Activated CD4-positive, alpha-beta T cell treated with anti-CD3 and anti-CD28 coated beads, Interleukin-2, amount 10 ng/mL, durations not matched to agents 7 days and 5 days (primary cell): ENCODE measurements at regions of chr17 and their contacts with region 1.

Region 1: DNA sequence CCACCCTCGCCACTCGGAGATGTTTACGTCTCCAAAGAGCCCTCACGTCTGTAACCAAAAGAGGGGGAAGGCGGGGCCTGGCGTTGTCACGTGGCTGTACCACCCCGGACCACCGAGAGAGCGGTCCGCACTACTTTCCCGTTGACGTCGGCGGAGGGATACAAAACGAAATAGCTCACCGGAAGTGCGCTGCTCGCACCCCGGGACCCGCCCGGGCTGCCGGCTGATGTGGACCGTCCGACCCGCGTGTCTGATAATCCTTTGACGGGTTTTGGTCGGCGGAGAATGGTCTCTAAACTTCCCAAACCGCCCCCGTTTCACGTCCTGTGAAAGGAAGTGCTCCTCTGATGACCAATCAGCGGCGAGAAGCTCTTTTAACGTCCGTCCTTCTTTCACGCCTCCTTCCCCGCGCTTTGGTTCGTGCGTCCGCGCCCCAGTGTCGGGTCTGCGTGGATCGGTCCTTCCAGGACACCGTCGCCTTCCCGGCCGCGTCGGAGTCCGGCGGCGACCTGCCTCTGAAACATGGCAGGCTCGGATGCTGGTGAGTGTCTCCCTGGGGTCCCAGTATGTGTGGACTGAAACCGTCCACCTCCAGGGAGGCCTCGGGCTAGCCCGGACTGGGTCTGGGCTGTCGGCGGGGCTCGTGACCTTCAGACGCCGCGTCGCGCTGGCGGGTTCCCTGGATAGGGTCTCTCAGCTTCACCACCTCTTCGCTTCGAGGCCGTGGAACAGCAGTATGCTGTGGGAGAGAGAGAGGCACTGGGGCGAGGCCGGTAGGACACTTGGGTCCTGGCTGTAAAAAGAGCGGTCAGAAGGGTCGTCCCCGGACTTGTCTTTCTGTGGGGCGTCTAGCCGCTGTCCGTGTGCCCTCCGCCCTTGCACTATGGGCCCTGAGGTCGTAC is at the start of gene CEP95:
- DNase-seq: peak; percentile 95
- H3K4me3 Mint-ChIP-seq: peak within 1 kb of the TSS; percentile 95
- H3K27ac Mint-ChIP-seq: peak within 1 kb of the TSS; percentile 100
- H3K4me1 Mint-ChIP-seq: peaks cover 52% of the 10 kb centered on the region
- H3K27me3 Mint-ChIP-seq: no peaks in the 10 kb centered on the region
- total RNA-seq, gene CEP95: 45.4 to 48.1 TPM

Region 2: DNA sequence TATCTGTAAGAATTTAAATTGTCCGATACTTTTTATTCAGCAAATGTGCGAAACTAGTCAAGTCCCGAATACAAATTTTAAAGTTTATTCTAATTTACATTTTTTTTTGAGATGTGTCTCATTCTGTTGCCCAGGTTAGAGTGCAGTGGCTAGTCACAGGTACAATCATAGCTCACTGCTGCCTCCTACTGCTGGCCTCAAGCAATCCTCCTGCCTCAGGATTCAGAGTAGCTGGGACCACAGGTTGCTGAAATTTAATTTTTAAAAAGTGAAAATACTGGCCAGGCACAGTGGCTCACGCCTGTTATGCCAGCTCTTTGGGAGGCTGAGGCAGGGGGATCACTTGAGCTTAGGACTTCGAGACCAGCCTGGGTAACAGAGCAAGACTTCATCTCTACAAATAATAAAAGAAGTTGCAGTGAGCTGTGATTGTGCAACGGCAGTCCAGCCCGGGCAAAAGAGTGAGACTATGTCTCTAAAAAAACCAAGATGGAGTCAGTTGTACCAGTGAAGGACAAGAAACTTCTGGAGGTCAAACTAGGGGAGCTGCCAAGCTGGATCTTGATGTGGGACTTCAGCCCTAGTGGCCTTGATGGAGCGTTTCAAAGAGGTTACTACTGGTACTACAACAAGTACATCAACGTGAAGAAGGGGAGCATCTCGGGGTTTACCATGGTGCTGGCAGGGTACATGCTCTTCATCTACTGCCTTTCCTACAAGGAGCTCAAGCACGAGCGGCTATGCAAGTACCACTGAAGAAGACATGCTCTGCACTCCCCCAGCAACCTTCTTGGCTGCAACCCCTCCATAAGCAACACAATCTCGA is 15.6 kb before region 1 on chr17:
- CTCF ChIA-PET with region 1: interaction called, 29 read pairs
- POLR2A ChIA-PET with region 1: interaction called, 15 read pairs
- DNase-seq: peak; percentile 75
- H3K4me3 Mint-ChIP-seq: no peak overlapping the region
- H3K27ac Mint-ChIP-seq: no peak overlapping the region
- H3K4me1 Mint-ChIP-seq: peaks cover 37% of the 10 kb centered on the region
- H3K27me3 Mint-ChIP-seq: no peaks in the 10 kb centered on the region

Region 3: DNA sequence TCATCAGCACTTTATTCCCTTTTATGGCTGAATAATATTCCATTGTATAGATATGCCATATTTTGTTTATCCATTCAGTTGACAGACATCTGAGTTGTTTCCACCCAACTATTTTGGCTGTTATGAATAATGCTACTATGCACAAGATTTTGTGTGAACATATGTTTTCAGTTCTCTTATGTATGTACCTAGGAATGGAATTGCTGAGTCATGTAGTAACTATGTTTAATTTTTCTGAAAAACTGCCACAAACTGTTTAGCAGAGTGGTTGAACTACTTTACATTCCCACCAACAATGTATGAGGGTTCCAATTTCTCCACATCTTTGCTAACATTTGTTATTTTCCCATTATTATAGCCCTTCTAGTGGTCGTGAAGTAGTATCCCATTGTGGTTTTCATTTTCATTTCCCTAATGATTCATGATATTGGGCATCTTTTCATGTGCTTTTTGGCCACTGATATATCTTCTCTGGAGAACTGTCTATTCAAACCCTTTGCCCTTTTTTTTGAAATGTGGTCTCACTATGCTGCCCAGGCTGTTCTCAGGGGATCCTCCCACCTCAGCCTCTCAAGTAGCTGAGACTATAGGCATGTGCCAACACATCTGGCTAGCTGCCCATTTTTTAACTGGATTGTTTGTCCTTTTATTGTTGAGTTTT is 128.9 kb after region 1 on chr17:
- CTCF ChIA-PET with region 1: no interaction called
- POLR2A ChIA-PET with region 1: interaction called, 11 read pairs
- DNase-seq: no peak
- H3K4me3 Mint-ChIP-seq: no peak overlapping the region
- H3K27ac Mint-ChIP-seq: no peak overlapping the region
- H3K4me1 Mint-ChIP-seq: peaks cover 32% of the 10 kb centered on the region
- H3K27me3 Mint-ChIP-seq: no peaks in the 10 kb centered on the region